BJ (cell line): ENCODE measurements at regions of chr5 and their contacts with region 1.

Region 1: GRCh38 chr5:136062366-136063274 is 33.8 kb downstream of the TGFBI start:
- DNase-seq: no peak
- H3K4me3 ChIP-seq: no peak overlapping the region
- H3K27me3 ChIP-seq: no peaks in the 10 kb centered on the region
- CTCF ChIP-seq: peak; percentile 43; the same call in 1 of the 2 replicates

Region 2: GRCh38 chr5:135085127-135085935 is 977.3 kb before region 1 on chr5:
- CTCF ChIA-PET with region 1: no interaction called
- POLR2A ChIA-PET with region 1: no interaction called
- DNase-seq: no peak
- H3K4me3 ChIP-seq: no peak overlapping the region
- H3K27me3 ChIP-seq: 0 out of 2 replicates have a peak, but pooled peaks cover 3% of the 10 kb centered on the region
- CTCF ChIP-seq: no peak

Region 3: GRCh38 chr5:135944967-135945560 is 117.6 kb before region 1 on chr5:
- CTCF ChIA-PET with region 1: interaction called, 37 read pairs
- POLR2A ChIA-PET with region 1: no interaction called
- DNase-seq: peak; percentile 23
- H3K4me3 ChIP-seq: no peak overlapping the region
- H3K27me3 ChIP-seq: 0 out of 2 replicates have a peak, but pooled peaks cover 4% of the 10 kb centered on the region
- CTCF ChIP-seq: peak; percentile 66

Region 4: GRCh38 chr5:135950611-135951010 is 112.0 kb before region 1 on chr5:
- CTCF ChIA-PET with region 1: interaction called, 37 read pairs
- POLR2A ChIA-PET with region 1: no interaction called
- DNase-seq: peak; percentile 24
- H3K4me3 ChIP-seq: no peak overlapping the region
- H3K27me3 ChIP-seq: no peaks in the 10 kb centered on the region
- CTCF ChIP-seq: no peak

Region 5: DNA sequence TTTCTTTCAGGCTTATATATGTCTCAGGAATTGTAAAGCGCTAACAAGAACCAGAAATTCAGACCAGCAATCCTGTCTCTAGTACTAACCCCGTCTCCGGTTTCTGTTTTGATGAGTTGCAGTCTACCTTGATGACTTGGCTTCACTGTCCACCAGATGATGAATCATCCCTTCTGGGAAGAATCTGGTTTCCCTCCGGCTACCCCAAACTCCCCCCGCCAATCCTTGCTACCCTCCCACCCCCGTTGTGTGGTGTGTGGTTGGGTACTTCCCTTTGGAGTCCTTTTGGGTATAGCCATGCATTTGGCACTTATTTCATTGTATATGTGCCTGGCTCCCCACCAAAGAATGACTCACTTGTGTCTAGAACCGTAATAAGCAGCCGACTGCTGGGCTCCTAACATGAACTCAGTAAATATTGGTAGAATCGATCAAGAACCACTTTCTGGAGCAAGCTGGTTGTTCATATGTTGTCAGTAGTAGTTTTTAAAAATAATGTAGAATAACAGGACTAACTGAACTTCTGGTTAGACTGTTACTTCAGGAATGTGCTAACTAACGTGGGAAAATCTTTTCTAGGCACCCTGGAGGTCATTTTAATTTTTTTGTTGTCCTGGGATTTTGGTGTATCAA is 42.1 kb before region 1 on chr5:
- CTCF ChIA-PET with region 1: interaction called, 15 read pairs
- POLR2A ChIA-PET with region 1: interaction called, 3 read pairs
- DNase-seq: peak; percentile 61
- H3K4me3 ChIP-seq: no peak overlapping the region
- H3K27me3 ChIP-seq: no peaks in the 10 kb centered on the region
- CTCF ChIP-seq: no peak

Region 6: DNA sequence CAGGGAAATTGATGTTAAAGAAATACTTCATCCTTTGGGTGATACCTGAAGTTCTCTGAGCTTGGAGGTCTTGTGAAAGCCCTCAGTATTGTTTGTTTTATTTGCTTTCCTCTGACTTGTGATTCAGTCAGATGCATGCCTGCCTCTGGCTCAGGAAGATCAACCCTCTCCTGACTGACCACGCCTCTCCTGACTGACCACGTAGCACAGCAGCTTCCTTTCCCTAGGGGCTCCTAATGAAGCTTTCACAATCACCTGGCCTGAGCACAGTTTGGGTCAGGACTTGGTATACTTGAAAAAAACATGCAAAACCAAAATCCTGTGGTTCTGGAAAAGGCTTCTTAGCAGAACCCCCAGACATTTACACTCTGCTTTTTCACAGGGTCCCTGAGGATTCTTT is 30.1 kb before region 1 on chr5:
- CTCF ChIA-PET with region 1: interaction called, 18 read pairs
- POLR2A ChIA-PET with region 1: no interaction called
- DNase-seq: no peak
- H3K4me3 ChIP-seq: no peak overlapping the region
- H3K27me3 ChIP-seq: no peaks in the 10 kb centered on the region
- CTCF ChIP-seq: no peak

Region 7: GRCh38 chr5:136073714-136074529 is 11.3 kb after region 1 on chr5:
- CTCF ChIA-PET with region 1: interaction called, 18 read pairs
- POLR2A ChIA-PET with region 1: no interaction called
- DNase-seq: no peak
- H3K4me3 ChIP-seq: no peak overlapping the region
- H3K27me3 ChIP-seq: no peaks in the 10 kb centered on the region
- CTCF ChIP-seq: no peak

Region 8: DNA sequence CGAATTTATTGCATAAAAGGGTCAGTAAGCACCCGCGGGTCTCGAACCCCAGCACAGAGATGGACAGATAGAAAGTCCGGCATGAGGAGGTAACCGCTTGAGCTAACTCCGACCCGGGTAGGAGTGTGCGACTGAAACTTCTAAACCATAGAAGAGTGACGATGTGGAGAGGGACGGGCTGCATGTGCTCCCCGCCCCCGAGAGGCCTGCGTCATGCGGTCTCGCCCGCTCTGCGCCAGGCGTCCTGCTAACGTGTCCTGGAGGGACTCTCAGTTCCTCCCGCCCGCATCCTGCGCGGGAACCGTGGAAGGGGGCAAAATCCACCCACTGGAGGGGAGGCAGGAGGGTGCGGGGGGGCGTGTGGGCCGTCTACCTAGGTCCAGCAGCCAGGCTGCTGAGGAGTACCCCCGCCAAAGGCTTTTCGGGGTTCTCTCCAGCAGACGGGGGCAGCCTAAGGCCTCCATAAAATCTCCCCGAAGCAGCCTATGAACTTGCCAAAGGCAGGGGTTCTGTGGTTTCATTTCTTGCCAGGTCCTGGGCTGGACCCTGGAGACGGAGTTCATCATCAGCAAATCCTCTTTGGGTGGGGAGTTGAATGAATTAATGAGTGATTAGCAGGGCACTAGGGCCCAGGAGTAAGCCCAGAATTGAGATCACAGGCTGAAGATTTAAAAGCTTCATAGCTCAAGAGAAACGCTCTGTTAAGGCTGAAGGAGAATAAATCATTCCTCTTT is 18.0 kb after region 1 on chr5:
- CTCF ChIA-PET with region 1: interaction called, 18 read pairs
- POLR2A ChIA-PET with region 1: no interaction called
- DNase-seq: peak; percentile 60
- H3K4me3 ChIP-seq: peak overlapping the region; percentile 42
- H3K27me3 ChIP-seq: no peaks in the 10 kb centered on the region; the same call in none of the 2 replicates
- CTCF ChIP-seq: no peak

Region 9: GRCh38 chr5:136127560-136127959 is 64.9 kb after region 1 on chr5:
- CTCF ChIA-PET with region 1: no interaction called
- POLR2A ChIA-PET with region 1: no interaction called
- DNase-seq: no peak
- H3K4me3 ChIP-seq: no peak overlapping the region
- H3K27me3 ChIP-seq: no peaks in the 10 kb centered on the region
- CTCF ChIP-seq: no peak